ENCODE measurements at regions of chr15 and their contacts with region 1.

Region 1: DNA sequence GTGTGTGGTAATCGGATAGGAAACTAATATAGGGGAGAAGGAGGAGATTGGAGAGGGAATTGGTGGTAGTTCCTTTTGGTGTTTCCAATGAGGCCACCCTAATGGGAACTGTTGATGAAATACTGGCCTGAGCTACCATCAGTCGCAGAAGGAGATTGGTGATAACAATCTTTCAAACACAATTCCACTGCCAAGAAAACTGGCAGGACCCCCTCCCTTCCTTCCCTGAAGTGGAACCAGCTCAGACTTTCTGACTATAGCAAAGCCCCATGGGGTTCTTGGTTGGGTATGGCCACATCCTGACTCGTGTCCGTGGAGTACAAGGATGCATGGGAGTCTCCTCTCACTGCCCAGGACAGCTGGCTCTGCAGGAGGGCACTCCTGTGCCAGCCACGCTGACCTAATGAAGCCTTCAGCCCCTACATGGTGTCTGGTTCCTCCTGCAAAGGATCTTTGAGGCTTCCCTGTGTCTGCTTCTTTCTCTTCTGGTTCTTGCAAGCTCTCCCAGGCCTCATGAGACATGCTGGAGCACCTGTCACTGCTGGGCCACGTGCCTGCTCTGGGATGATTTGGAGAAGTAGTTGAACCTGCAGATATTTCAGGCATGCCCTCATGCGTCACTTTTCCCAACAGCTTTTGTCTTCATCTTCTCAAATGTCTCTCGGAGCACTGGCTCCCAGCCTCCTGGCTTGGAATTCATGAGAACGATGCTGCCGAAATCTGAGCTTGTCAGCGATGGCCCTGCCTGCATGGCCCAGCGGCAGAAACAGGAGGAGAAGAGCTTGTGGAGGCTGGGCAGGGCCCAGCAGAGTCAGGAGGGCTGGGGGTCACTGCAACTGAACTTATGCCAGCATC is 90.0 kb upstream of the ADPGK start:
- DNase-seq: no peak
- ATAC-seq: no peak
- H3K4me3 ChIP-seq: no peak overlapping the region
- H3K27ac ChIP-seq: no peak overlapping the region
- H3K4me1 ChIP-seq: peaks cover 0 to 9% (median 0%) of the 10 kb centered on the region in 9 donors
- H3K27me3 ChIP-seq: peaks cover 0 to 12% (median 0%) of the 10 kb centered on the region in 7 donors
- CTCF ChIP-seq: no peak

Region 2: GRCh38 chr15:72827226-72827625 is 46.4 kb before region 1 on chr15:
- intact Hi-C with region 1: loop called in 1 of 10 experiments (anchors 5 kb)
- DNase-seq: no peak
- ATAC-seq: no peak
- H3K4me3 ChIP-seq: no peak overlapping the region
- H3K27ac ChIP-seq: no peak overlapping the region
- H3K4me1 ChIP-seq: no peaks in the 10 kb centered on the region
- H3K27me3 ChIP-seq: peaks cover 0 to 13% (median 7%) of the 10 kb centered on the region in 7 donors
- CTCF ChIP-seq: no peak

Region 3: DNA sequence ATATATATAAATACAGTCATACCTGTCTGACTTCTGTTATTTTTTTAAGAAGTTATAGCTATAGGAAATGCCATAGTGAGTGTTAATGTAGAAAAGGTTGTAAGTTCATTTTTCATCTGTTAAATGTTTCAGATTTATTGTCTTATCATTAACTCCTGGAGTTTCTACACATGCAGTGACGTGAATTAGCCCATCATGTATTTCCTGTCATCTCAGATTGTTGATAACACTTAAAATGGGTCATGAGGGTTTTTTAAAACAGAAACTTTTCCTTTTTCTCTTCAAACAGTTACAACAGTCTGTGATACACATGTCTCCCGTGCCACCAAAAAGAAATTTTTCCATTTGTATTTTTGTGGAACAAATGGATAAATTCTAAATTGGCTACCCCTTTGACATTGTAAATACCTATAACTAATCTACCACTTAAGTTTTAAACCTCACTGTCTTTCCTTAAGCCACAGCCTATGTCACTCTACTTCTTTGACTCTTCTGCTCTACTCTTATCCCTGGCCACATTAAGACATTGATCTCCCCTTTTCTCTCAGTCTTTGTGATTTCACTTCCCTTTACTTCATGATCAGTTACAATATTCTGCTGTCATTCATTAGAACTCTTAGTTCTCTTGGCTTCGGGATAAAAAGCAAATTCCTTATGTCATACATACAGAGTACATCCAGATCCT is 267.8 kb after region 1 on chr15:
- intact Hi-C with region 1: no loop called
- DNase-seq: no peak
- ATAC-seq: no peak
- H3K4me3 ChIP-seq: no peak overlapping the region
- H3K27ac ChIP-seq: no peak overlapping the region
- H3K4me1 ChIP-seq: no peaks in the 10 kb centered on the region
- H3K27me3 ChIP-seq: no peaks in the 10 kb centered on the region
- CTCF ChIP-seq: no peak

Measured in heart right ventricle (tissue), 16 donors.